GM10248 (cell line): ENCODE measurements at regions of chr9 and their contacts with region 1.

Region 1: GRCh38 chr9:89358985-89359384 is 40.7 kb downstream of the SECISBP2 start:
- DNase-seq: no peak
- CTCF ChIP-seq: no peak

Region 2: GRCh38 chr9:89347651-89348050 is 11.3 kb before region 1 on chr9:
- CTCF ChIA-PET with region 1: interaction called, 22 read pairs
- POLR2A ChIA-PET with region 1: interaction called, 8 read pairs
- DNase-seq: no peak
- CTCF ChIP-seq: no peak